ENCODE measurements at regions of chr19 and their contacts with region 1.

Region 1: DNA sequence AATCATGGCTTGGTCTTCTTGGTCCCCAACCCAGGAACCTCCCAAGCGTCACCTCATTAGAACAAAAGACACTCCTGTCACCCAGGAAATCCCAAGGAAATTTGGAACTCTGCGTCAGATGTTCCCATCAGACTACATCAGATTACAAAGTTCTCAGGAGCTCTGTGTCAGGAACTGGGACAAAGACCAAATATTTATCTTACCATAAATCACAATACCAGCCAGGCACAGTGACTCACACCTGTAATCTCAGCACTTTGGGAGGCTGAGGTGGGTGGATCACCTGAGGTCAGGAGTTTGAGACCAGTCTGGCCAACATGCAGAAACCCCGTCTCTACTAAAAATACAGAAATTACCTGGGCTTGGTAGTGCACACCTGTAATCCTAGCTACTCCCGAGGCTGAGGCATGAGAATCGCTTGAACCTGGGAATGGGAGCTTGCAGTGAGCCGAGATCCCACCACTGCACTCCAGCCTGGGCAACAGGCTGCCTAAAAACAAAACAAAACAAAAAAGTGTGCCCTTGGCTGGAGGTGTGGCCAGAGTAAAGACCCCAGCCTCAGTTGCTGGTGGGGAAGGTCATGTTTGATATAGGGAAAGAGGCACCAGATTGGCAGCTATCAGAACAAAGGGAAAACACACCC is 16.7 kb upstream of the CCDC124 start:
- DNase-seq: peak; percentile 71
- H3K4me3 ChIP-seq: no peak overlapping the region
- H3K27ac ChIP-seq: no peak overlapping the region
- H3K4me1 ChIP-seq: no peaks in the 10 kb centered on the region
- H3K27me3 ChIP-seq: no peaks in the 10 kb centered on the region
- CTCF ChIP-seq: no peak

Region 2: GRCh38 chr19:17718947-17719711 is 196.9 kb before region 1 on chr19 and contains the start of gene MAP1S:
- CTCF ChIA-PET with region 1: no interaction called
- dilution Hi-C with region 1: no loop called
- in situ Hi-C with region 1: no loop called
- intact Hi-C with region 1: no loop called
- DNase-seq: peak; percentile 19
- H3K4me3 ChIP-seq: peak within 1 kb of the TSS; percentile 75 to 92 (median 88)
- H3K27ac ChIP-seq: no peak within 1 kb of the TSS
- H3K4me1 ChIP-seq: peaks cover 28% of the 10 kb centered on the region
- H3K27me3 ChIP-seq: no peaks in the 10 kb centered on the region
- CTCF ChIP-seq: no peak
- total RNA-seq, gene MAP1S: 15.3 to 50.5 TPM

Region 3: DNA sequence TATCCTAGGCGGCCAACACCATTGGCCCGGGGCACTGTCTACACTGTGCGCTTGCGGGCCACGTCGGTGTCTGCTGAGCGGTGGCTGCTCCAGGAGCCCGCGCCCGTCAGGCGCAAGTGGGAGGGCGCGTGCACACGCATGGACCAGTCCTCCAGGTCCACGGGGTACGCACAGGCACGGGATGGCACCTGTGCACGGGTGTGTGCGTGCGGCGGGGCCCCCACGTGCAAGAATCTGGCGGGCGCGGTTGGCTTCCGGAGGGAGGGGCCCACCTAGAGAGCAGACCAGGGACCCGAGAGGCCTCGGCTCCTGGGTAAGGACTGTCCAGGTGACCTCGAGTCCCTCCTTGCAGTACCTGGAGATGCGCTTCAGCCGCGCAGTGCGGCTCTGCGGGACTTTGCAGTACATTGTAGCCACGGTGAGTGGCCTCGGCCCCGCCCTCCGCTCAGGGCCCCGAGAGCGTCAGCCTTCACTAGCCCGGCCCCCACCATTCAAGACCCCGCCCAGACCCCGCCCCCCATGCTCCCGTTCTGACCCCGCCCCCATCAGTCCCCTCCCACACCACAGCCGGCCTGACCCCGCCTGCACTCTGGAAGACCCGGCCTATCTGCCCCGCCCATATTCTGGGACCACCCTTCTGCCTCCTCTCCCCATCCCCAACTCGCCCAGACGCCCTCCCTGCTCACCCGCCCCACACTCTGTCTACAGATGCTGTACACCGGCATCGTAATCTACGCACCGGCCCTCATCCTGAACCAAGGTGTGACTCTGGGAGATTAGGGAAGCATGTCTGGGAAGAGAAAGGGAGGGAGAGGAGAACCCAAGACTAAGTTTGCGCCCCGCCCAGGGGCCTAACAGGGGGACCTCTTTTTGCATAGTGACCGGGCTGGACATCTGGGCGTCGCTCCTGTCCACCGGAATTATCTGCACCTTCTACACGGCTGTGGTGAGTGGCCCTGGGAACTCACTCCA is 42.0 kb before region 1 on chr19:
- CTCF ChIA-PET with region 1: no interaction called
- dilution Hi-C with region 1: loop called (anchors 5 kb)
- in situ Hi-C with region 1: no loop called
- intact Hi-C with region 1: no loop called
- DNase-seq: peak; percentile 37
- H3K4me3 ChIP-seq: peak overlapping the region in 2 of 3 experiments; percentile 2 to 6
- H3K27ac ChIP-seq: no peak overlapping the region
- H3K4me1 ChIP-seq: peaks cover 5% of the 10 kb centered on the region
- H3K27me3 ChIP-seq: peaks cover 9% of the 10 kb centered on the region
- CTCF ChIP-seq: no peak

Measured in mammary epithelial cell (primary cell).